PC-3 (cell line): ENCODE measurements at regions of chr10 and their contacts with region 1.

Region 1: GRCh38 chr10:66827353-66827752 is 98.5 kb upstream of the LRRTM3 start:
- DNase-seq: peak; percentile 100
- ATAC-seq: peak; percentile 85
- H3K4me3 ChIP-seq: peak overlapping the region; percentile 11
- H3K27ac ChIP-seq: peak overlapping the region; percentile 70
- H3K4me1 ChIP-seq: peaks cover 42% of the 10 kb centered on the region
- H3K27me3 ChIP-seq: no peaks in the 10 kb centered on the region
- CTCF ChIP-seq: no peak

Region 2: GRCh38 chr10:66349726-66350125 is 477.6 kb before region 1 on chr10:
- CTCF ChIA-PET with region 1: no interaction called
- POLR2A ChIA-PET with region 1: interaction called, 6 read pairs
- intact Hi-C with region 1: loop called (anchors 2 kb)
- DNase-seq: peak; percentile 99
- ATAC-seq: peak; percentile 84
- H3K4me3 ChIP-seq: peak overlapping the region; percentile 30
- H3K27ac ChIP-seq: peak overlapping the region; percentile 84
- H3K4me1 ChIP-seq: peaks cover 38% of the 10 kb centered on the region
- H3K27me3 ChIP-seq: no peaks in the 10 kb centered on the region
- CTCF ChIP-seq: no peak

Region 3: DNA sequence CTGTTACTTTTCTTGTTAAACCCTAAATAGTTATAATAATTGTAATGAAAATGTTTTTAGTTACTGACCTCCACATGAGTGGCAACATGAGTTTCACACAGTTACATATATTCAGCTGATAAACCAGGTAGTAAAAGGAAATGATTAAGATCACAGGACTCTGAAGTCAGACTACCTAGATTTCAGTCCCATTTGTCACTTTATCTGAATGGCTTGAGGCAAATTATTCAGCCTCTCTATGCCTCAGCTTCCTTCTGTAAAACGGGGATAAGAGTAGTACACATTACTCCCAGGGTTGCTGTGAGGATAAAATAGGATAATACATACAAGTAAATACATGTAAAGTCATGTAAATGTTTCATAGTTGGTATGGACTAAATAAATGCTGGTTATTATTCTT is 155.8 kb before region 1 on chr10:
- CTCF ChIA-PET with region 1: no interaction called
- POLR2A ChIA-PET with region 1: no interaction called
- intact Hi-C with region 1: loop called (anchors 5 kb)
- DNase-seq: peak; percentile 95
- ATAC-seq: peak; percentile 88
- H3K4me3 ChIP-seq: no peak overlapping the region
- H3K27ac ChIP-seq: no peak overlapping the region
- H3K4me1 ChIP-seq: peaks cover 24% of the 10 kb centered on the region
- H3K27me3 ChIP-seq: no peaks in the 10 kb centered on the region
- CTCF ChIP-seq: no peak

Region 4: DNA sequence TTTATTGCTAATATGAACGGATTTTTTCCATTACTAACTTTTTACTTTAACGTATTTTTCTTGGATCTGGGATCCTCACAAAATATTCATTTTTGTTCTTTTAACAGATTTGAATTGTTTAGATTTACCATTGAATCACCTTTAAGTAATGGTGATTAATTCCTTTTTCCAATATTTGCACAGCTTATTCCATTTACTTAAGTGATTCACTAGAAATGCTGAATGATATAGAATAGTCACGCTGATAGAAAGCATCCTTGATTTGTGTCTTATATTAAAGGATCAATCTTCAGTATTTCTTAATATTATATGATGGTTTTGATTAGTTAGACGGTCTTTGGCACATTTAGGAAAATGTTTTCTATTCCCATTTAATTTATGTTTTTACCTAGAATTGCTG is 18.0 kb before region 1 on chr10:
- CTCF ChIA-PET with region 1: no interaction called
- POLR2A ChIA-PET with region 1: no interaction called
- intact Hi-C with region 1: loop called (anchors 1 kb)
- DNase-seq: peak; percentile 97
- ATAC-seq: peak; percentile 79
- H3K4me3 ChIP-seq: no peak overlapping the region
- H3K27ac ChIP-seq: peak overlapping the region; percentile 85
- H3K4me1 ChIP-seq: peaks cover 36% of the 10 kb centered on the region
- H3K27me3 ChIP-seq: no peaks in the 10 kb centered on the region
- CTCF ChIP-seq: no peak

Region 5: DNA sequence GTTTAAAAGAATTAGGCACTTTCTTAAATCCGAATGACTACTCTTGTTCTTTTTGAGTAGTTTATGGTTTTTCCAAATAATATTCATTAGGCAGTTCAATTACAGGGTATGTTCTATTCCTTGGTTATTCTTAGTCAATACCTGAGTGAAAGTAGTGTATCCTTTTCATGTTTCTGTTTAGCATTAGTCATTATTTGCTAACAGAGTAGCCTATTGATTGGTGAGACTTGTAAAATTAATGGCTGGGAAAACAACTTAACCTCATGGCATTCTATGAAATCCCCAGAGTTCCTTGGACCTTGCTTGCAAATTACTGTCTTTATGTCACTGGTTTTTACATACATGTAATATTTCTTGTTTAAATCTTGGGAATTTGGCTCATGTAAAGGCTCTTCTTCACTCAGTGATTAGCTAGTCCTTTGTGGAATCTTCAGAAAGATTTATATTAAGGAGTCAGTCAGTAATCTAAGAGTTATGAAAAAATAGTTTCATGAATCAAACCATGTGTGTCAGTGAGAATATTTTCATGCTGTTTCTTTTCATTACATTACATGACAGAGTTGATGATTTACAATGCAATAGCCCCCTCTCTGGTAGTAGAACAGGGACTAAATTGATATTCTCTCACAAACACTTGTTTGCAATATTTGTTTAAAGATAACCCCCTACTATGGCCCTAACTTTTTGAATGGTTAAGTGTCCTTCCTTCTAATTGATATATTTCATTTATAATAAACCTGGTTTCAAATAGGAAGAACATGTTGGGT is 17.0 kb after region 1 on chr10:
- CTCF ChIA-PET with region 1: no interaction called
- POLR2A ChIA-PET with region 1: interaction called, 4 read pairs
- intact Hi-C with region 1: loop called (anchors 1 kb)
- DNase-seq: peak; percentile 96
- ATAC-seq: peak; percentile 97
- H3K4me3 ChIP-seq: no peak overlapping the region
- H3K27ac ChIP-seq: peak overlapping the region; percentile 35
- H3K4me1 ChIP-seq: peaks cover 26% of the 10 kb centered on the region
- H3K27me3 ChIP-seq: no peaks in the 10 kb centered on the region
- CTCF ChIP-seq: peak; percentile 68

Region 6: GRCh38 chr10:66925896-66926715 is 98.8 kb after region 1 on chr10 and contains the start of gene LRRTM3:
- CTCF ChIA-PET with region 1: interaction called, 9 read pairs
- POLR2A ChIA-PET with region 1: no interaction called
- intact Hi-C with region 1: loop called (anchors 1 kb)
- DNase-seq: peak; percentile 99
- ATAC-seq: peak; percentile 99
- H3K4me3 ChIP-seq: peak within 1 kb of the TSS; percentile 42
- H3K27ac ChIP-seq: no peak within 1 kb of the TSS
- H3K4me1 ChIP-seq: peaks cover 18% of the 10 kb centered on the region
- H3K27me3 ChIP-seq: peaks cover 6% of the 10 kb centered on the region; the same call in 1 of the 2 replicates
- CTCF ChIP-seq: peak; percentile 99
- total RNA-seq, gene LRRTM3: 0.12 and 0.15 TPM in 2 replicates